ENCODE measurements at regions of chr16 and their contacts with region 1.

Region 1: DNA sequence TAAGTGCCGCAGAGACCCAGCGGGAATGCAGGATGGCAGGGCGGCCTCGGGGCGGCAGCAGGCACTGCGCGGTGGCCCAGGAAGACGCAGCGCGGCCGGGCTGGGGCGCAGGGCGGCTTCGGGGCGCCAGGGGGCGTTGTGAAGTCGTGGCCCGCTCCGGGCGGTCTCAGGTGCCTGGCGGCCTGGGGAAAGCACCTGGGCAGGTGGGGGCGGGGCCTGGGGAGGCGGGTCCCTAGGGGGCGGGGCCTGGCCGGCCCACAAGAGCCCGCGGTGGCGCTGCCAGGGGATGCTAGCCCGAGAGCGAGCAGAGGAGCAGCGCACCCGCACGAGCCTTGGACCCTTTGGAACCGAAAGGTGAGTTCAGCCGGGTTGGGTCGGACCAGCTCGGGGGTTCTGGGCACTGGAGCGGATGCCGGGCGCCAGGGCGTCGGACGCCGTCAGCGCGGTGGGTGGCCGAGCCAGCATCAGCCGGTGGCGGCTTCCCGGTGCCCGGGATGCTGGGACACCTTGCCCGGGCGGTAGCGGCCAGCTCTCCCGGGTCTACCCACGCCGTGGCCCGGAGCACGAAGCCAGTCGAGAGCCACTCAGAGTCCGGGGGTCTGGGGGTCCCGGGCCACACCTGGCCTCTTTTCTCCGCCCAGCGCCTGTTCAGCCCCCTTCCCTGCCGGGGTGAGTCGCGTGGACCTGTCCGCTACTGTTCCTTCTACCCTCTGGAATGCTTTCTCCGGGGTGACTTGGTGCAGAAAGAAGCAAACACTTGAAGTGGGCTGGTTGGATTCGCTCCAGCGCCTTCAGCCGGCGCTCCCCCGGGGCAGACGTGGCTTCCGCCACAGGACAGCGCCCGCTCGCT is at the start of gene SCNN1G:
- DNase-seq: peak; percentile 80
- H3K4me3 ChIP-seq: peak within 1 kb of the TSS; percentile 22 to 57 (median 47)
- H3K27ac ChIP-seq: peak within 1 kb of the TSS in 1 of 4 donors; percentile 20
- H3K4me1 ChIP-seq: peaks cover 0 to 15% (median 14%) of the 10 kb centered on the region in 4 donors
- H3K27me3 ChIP-seq: peaks cover 16 to 46% (median 19%) of the 10 kb centered on the region in 3 donors
- CTCF ChIP-seq: peak; percentile 74 to 98 (median 90)
- EP300 ChIP-seq: no peak
- POLR2A ChIP-seq: no peak
- total RNA-seq, gene SCNN1G: under 0.01 to 0.16 TPM in 2 of 4 donors, not detected in the others

Region 2: GRCh38 chr16:22844416-22844815 is 338.3 kb before region 1 on chr16:
- intact Hi-C with region 1: no loop called
- DNase-seq: no peak
- H3K4me3 ChIP-seq: no peak overlapping the region
- H3K27ac ChIP-seq: no peak overlapping the region
- H3K4me1 ChIP-seq: no peaks in the 10 kb centered on the region
- H3K27me3 ChIP-seq: peaks cover 0 to 4% (median 0%) of the 10 kb centered on the region in 3 donors
- CTCF ChIP-seq: no peak
- EP300 ChIP-seq: no peak
- POLR2A ChIP-seq: no peak

Region 3: DNA sequence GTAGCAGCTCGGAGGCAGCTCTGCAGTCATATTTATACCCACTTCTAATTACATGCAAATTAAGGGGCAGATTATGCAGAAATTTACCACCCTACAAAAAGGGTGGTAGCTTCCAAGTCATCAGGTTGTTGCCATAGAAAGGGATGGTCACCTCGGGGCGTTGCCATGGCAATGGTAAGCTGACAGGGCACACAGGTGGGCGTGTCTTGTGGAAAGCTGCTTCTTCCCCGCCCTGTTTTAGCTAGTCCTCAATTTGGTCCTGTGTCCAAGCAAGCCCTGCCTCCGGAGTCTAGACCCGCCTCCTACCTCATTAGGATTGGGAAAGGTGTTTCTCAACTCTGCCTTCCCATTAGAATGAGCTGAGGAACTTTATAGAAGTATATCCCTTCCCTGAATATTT is 270.0 kb before region 1 on chr16:
- intact Hi-C with region 1: no loop called
- DNase-seq: no peak
- H3K4me3 ChIP-seq: no peak overlapping the region
- H3K27ac ChIP-seq: no peak overlapping the region
- H3K4me1 ChIP-seq: no peaks in the 10 kb centered on the region
- H3K27me3 ChIP-seq: no peaks in the 10 kb centered on the region
- CTCF ChIP-seq: no peak
- EP300 ChIP-seq: no peak
- POLR2A ChIP-seq: no peak

Region 4: DNA sequence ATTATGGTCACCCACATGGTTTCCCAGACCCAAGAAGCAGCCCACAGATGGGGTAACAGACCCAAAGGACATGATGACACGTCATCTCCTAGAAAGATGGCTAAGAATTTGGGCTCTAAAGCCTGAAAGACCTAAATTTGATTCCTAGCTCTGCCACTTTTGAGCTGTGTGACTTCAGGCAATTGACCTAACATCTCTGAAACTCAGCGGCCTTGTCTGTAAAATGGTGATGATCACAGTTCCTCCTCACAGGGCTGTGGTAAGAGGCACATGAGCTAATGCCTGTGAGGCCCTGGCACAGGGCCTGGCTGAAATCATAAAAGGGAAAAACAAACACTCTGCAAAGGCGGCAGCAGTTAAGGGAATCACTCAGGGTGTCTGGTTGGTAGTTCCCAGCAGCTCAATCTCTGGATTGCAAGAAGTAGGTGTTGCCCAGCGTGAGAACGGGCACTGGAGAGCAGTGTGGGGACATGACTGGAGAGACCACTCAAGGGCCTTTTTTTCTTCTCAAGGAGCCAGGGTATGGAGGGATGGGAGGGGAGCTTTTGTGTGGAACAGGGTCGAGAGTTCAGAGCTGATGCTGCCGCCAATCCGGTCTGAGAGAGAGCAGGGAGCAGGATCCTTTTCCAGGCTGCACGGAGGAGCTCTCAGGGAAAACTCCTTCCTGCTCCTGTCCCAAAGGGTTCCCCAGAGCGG is 134.4 kb after region 1 on chr16:
- intact Hi-C with region 1: loop called (anchors 10 kb)
- DNase-seq: peak; percentile 73
- H3K4me3 ChIP-seq: peak overlapping the region in 1 of 4 donors; percentile 3
- H3K27ac ChIP-seq: peak overlapping the region in 3 of 4 donors; percentile 48 to 71 (median 59)
- H3K4me1 ChIP-seq: peaks cover 0 to 17% (median 6%) of the 10 kb centered on the region in 4 donors
- H3K27me3 ChIP-seq: no peaks in the 10 kb centered on the region
- CTCF ChIP-seq: no peak
- EP300 ChIP-seq: peak in 2 of 4 donors; percentile 18 to 28
- POLR2A ChIP-seq: no peak

Region 5: GRCh38 chr16:23435500-23435899 is 252.8 kb after region 1 on chr16:
- intact Hi-C with region 1: loop called (anchors 1 kb)
- DNase-seq: peak; percentile 74
- H3K4me3 ChIP-seq: no peak overlapping the region
- H3K27ac ChIP-seq: no peak overlapping the region
- H3K4me1 ChIP-seq: peaks cover 0 to 9% (median 7%) of the 10 kb centered on the region in 4 donors
- H3K27me3 ChIP-seq: no peaks in the 10 kb centered on the region
- CTCF ChIP-seq: peak; percentile 65 to 80 (median 75)
- EP300 ChIP-seq: no peak
- POLR2A ChIP-seq: no peak